Adrenal gland (tissue), 19 donors: ENCODE measurements at regions of chr12 and their contacts with region 1.

Region 1: DNA sequence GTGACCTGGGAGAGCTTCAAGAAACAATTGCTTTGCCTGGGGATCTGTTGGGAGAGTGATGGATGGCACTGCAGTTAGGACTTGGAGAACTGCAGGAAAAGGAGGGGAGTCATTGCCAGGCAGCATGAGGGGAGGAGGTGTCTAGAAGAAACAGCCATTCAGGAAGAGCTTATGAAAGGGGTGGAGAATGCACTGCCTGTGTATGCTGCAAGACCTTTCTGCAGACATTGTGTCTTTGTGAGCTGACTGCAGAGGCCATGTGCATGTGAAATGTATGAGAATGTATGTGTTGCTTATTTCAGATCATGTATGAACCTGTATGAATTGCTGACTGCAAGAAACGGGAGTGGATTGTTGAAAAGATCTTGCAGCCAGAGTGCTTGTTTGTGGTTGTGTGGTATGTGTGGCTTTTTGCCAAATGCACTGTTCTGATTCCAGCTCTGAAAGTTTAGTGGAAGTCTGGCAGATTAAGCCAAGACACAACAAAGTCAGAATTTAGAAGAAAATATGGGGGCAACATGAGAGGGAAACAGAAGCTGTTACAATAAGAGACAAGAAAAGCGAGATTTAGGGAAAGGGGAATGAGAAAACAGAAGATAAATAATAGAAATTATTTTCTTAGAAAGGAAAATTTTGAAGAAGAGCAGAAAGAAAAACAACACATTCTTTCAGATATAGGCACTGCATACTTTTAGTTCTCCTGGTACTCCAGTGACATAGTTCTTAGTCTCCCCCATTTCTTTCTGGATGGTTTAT is 9.8 kb upstream of the RIMKLB start:
- DNase-seq: peak; percentile 65 to 88 (median 83)
- H3K4me3 ChIP-seq: peak overlapping the region in 1 of 4 donors; percentile 8
- H3K27ac ChIP-seq: peak overlapping the region in 1 of 5 donors; percentile 4
- H3K4me1 ChIP-seq: peaks cover 5 to 18% of the 10 kb centered on the region in 2 donors
- H3K27me3 ChIP-seq: no peaks in the 10 kb centered on the region
- CTCF ChIP-seq: no peak
- POLR2A ChIP-seq: peak in 1 of 2 donors; percentile 60

Region 2: GRCh38 chr12:8823565-8824300 is 135.7 kb after region 1 on chr12:
- intact Hi-C with region 1: loop called (anchors 2 to 5 kb)
- DNase-seq: peak; percentile 16 to 55 (median 37)
- H3K4me3 ChIP-seq: no peak overlapping the region
- H3K27ac ChIP-seq: no peak overlapping the region
- H3K4me1 ChIP-seq: no peaks in the 10 kb centered on the region
- H3K27me3 ChIP-seq: no peaks in the 10 kb centered on the region
- CTCF ChIP-seq: peak; percentile 47 to 93 (median 76)
- POLR2A ChIP-seq: no peak

Region 3: GRCh38 chr12:8837291-8837690 is 149.3 kb after region 1 on chr12:
- intact Hi-C with region 1: no loop called
- DNase-seq: no peak
- H3K4me3 ChIP-seq: no peak overlapping the region
- H3K27ac ChIP-seq: no peak overlapping the region
- H3K4me1 ChIP-seq: no peaks in the 10 kb centered on the region
- H3K27me3 ChIP-seq: no peaks in the 10 kb centered on the region
- CTCF ChIP-seq: no peak
- POLR2A ChIP-seq: no peak

Region 4: GRCh38 chr12:8914716-8915526 is 226.9 kb after region 1 on chr12:
- intact Hi-C with region 1: no loop called
- DNase-seq: peak; percentile 52 to 78 (median 58)
- H3K4me3 ChIP-seq: peak overlapping the region in 2 of 4 donors; percentile 74 to 88
- H3K27ac ChIP-seq: peak overlapping the region in 2 of 5 donors; percentile 85 to 88
- H3K4me1 ChIP-seq: peaks cover 5 to 23% of the 10 kb centered on the region in 2 donors
- H3K27me3 ChIP-seq: no peaks in the 10 kb centered on the region
- CTCF ChIP-seq: no peak
- POLR2A ChIP-seq: no peak